ENCODE measurements at regions of chr4 and their contacts with region 1.

Region 1: GRCh38 chr4:7939377-7940108 is at the start of gene AFAP1:
- DNase-seq: peak; percentile 90 to 92
- ATAC-seq: peak; percentile 96 to 98 (median 98)
- H3K4me3 ChIP-seq: peak within 1 kb of the TSS; percentile 74
- H3K27ac ChIP-seq: peak within 1 kb of the TSS; percentile 57
- H3K4me1 ChIP-seq: no peaks in the 10 kb centered on the region
- H3K27me3 ChIP-seq: peaks cover 0 to 15% (median 13%) of the 10 kb centered on the region in 3 donors
- CTCF ChIP-seq: no peak
- total RNA-seq, gene AFAP1: 2.6 to 11.4 (median 4.3) TPM

Region 2: DNA sequence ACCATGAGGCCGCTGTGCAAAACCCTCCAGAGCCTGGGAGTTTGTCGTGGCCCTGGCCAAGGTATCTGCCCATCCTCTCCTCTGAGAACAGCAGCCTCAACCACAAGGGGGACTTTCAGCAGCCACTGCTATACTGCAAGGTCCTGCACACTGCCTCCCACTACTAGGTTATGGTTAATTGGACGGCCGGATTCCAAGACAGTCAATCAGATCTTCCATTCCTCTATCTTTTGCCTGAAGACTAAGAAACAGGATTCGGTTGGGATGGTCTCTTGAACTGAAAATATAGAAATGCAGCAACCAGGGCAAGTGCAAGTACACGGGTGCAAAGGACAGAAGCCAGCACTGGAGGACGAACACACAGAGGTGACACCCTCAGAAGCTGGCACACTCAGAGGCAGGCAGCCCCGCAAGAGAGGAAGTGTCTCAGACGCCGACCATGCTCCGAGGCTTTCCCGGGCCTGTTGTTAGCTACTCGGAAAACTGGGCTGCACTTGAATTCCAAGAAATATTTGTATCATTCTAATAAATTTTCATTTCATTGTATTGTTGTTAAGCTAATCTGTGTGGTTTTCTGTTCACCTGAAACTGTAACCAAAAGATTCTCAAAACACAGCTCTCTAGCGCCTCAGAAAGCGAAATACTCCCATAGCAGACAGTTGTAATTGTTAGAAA is 63.2 kb before region 1 on chr4:
- intact Hi-C with region 1: loop called in 1 of 2 experiments (anchors 5 kb)
- DNase-seq: no peak
- ATAC-seq: no peak
- H3K4me3 ChIP-seq: no peak overlapping the region
- H3K27ac ChIP-seq: no peak overlapping the region
- H3K4me1 ChIP-seq: peaks cover 5% of the 10 kb centered on the region
- H3K27me3 ChIP-seq: peaks cover 0 to 2% (median 0%) of the 10 kb centered on the region in 3 donors
- CTCF ChIP-seq: no peak

Measured in psoas muscle (tissue), 8 donors.